Posterior cingulate gyrus (tissue), 11 donors: ENCODE measurements at regions of chr1 and their contacts with region 1.

Region 1: GRCh38 chr1:33455539-33456501 is 16.6 kb upstream of the ZSCAN20 start:
- DNase-seq: peak in 5 of 10 donors; percentile 25 to 91 (median 45)

Region 2: DNA sequence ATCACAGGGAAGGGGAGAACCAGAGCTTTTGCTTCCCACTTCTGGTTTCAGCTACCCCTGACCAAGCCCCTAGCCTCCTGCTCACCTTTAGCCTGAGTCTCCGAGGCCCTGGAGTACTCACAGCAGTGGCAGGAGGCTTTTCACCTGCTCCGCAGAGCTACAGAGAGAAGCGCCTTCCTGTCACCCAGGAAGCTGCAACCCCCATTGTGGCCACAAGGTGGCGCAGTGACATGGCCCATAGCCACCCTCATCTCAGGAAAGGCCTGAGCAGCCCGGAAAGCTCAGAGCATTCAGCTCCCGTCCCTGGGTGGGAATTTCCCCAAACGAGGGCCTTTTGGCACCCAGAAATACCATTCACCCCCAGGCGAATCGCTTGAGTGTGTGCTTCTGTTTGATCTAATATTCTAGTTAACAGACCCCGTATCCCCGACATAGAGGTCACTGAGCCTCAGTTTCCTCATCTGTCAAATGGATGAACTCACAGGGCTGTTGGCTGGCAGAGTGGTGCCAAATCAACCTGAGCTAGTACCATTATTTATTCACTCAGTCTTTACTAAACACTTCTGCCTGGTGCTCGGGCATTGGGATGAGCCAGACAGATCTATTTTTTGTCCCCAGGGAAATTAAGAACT is 160.3 kb before region 1 on chr1:
- intact Hi-C with region 1: loop called (anchors 5 kb)
- DNase-seq: peak; percentile 84 to 98 (median 94)

Region 3: GRCh38 chr1:33384040-33384812 is 71.6 kb before region 1 on chr1:
- intact Hi-C with region 1: no loop called
- DNase-seq: no peak

Region 4: GRCh38 chr1:33517596-33518250 is 61.9 kb after region 1 on chr1:
- intact Hi-C with region 1: no loop called
- DNase-seq: peak in 6 of 10 donors; percentile 24 to 91 (median 50)